Activated CD4-positive, alpha-beta T cell treated with anti-CD3 and anti-CD28 coated beads for 36 hours (primary cell): ENCODE measurements at regions of chr1 and their contacts with region 1.

Region 1: GRCh38 chr1:203172128-203173010 is 3.3 kb downstream of the MYBPH start:
- DNase-seq: peak; percentile 75
- ATAC-seq: peak; percentile 75
- H3K4me3 Mint-ChIP-seq: no peak overlapping the region
- H3K27ac Mint-ChIP-seq: no peak overlapping the region
- H3K4me1 Mint-ChIP-seq: no peaks in the 10 kb centered on the region
- H3K27me3 Mint-ChIP-seq: no peaks in the 10 kb centered on the region

Region 2: GRCh38 chr1:203038891-203039608 is 133.3 kb before region 1 on chr1:
- CTCF ChIA-PET with region 1: interaction called, 28 read pairs
- POLR2A ChIA-PET with region 1: no interaction called
- intact Hi-C with region 1: loop called (anchors 1 to 5 kb)
- DNase-seq: peak; percentile 77
- ATAC-seq: peak; percentile 85
- H3K4me3 Mint-ChIP-seq: no peak overlapping the region
- H3K27ac Mint-ChIP-seq: no peak overlapping the region
- H3K4me1 Mint-ChIP-seq: peaks cover 4% of the 10 kb centered on the region
- H3K27me3 Mint-ChIP-seq: peaks cover 4% of the 10 kb centered on the region

Region 3: GRCh38 chr1:203084588-203085502 is 87.5 kb before region 1 on chr1:
- CTCF ChIA-PET with region 1: interaction called, 4 read pairs
- POLR2A ChIA-PET with region 1: no interaction called
- intact Hi-C with region 1: loop called in 1 of 2 experiments (anchors 1 kb)
- DNase-seq: peak; percentile 71
- ATAC-seq: peak; percentile 68
- H3K4me3 Mint-ChIP-seq: no peak overlapping the region
- H3K27ac Mint-ChIP-seq: no peak overlapping the region
- H3K4me1 Mint-ChIP-seq: no peaks in the 10 kb centered on the region
- H3K27me3 Mint-ChIP-seq: peaks cover 2% of the 10 kb centered on the region

Region 4: GRCh38 chr1:203117611-203118575 is 54.5 kb before region 1 on chr1:
- CTCF ChIA-PET with region 1: interaction called, 6 read pairs
- POLR2A ChIA-PET with region 1: no interaction called
- intact Hi-C with region 1: loop called in 1 of 2 experiments (anchors 2 kb)
- DNase-seq: peak; percentile 73
- ATAC-seq: peak; percentile 65
- H3K4me3 Mint-ChIP-seq: no peak overlapping the region
- H3K27ac Mint-ChIP-seq: no peak overlapping the region
- H3K4me1 Mint-ChIP-seq: peaks cover 2% of the 10 kb centered on the region
- H3K27me3 Mint-ChIP-seq: peaks cover 38% of the 10 kb centered on the region

Region 5: DNA sequence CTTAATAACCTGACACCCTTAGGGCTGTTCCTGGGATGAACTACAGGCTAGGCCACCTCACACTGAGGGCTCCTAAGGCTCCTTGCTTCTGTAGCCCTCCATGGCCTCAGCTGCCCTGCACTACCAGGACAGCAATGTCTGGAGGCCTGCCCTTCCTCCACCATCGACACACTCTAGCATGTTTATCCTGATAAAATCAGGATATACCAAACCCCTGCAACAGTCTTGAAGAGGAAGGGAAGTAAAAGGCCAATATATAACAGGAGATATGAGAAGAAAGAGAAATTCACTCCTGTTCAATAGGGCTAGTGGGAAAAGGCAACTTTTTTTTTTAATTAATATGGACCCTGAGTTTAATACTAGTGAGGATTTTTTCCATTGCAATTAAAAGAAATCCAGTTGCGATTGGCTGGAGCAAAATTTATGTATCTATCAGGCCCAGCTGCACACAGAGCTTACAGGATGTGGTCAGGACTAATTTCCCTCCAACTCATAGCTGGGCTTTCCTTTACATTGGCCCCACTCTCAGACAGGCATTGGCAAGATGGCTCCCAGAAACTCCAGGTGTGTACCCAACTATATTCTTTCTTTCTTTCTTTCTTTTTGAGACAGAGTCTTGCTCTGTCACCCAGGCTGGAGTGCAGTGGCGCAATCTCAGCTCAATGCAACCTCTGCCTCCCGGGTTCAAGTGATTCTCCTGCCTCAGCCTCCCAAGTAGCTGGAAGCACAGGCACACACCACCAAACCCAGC is 440.7 kb after region 1 on chr1:
- CTCF ChIA-PET with region 1: no interaction called
- POLR2A ChIA-PET with region 1: no interaction called
- intact Hi-C with region 1: no loop called
- DNase-seq: no peak
- ATAC-seq: peak; percentile 76
- H3K4me3 Mint-ChIP-seq: no peak overlapping the region
- H3K27ac Mint-ChIP-seq: peak overlapping the region; percentile 55
- H3K4me1 Mint-ChIP-seq: peaks cover 30% of the 10 kb centered on the region
- H3K27me3 Mint-ChIP-seq: no peaks in the 10 kb centered on the region